ENCODE measurements at regions of chr5 and their contacts with region 1.

Region 1: DNA sequence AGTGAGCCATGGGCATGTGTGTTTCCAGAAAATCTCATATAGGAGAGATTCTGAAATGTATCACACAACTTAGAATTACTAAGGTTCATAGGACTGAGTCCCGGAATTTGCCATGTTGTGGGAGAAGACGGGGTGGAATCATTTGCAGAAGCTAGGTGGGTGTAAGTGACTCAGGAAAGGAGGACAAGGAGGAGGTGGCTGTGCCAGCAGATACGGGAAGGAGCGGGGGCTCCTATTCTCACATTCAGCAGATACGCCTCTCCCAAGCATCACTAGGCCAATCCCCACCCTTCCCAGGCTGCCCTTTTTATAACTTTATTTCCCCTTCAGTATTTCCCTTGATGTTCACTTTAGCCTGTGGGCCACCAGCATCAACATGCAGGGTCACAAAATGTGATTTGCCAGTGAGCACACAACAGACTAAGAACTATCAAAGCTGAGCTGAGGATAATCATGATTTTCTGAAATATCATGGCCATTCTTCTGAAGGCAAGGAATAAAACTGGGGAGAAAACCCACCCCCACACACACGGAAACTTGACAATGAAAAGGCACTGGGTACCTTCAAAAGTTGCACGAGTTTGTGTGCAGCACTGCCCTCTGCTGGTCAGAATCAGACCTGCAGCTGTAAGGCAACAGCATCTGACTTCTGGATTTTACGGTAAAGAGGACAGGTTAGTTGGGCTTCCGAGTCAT is 133.2 kb downstream of the MTX3 start:
- DNase-seq: peak; percentile 78 to 84
- H3K4me3 ChIP-seq: no peak overlapping the region
- H3K27ac ChIP-seq: no peak overlapping the region
- H3K4me1 ChIP-seq: no peaks in the 10 kb centered on the region
- H3K27me3 ChIP-seq: no peaks in the 10 kb centered on the region
- CTCF ChIP-seq: peak; percentile 75 to 95 (median 88)
- POLR2A ChIP-seq: no peak

Region 2: DNA sequence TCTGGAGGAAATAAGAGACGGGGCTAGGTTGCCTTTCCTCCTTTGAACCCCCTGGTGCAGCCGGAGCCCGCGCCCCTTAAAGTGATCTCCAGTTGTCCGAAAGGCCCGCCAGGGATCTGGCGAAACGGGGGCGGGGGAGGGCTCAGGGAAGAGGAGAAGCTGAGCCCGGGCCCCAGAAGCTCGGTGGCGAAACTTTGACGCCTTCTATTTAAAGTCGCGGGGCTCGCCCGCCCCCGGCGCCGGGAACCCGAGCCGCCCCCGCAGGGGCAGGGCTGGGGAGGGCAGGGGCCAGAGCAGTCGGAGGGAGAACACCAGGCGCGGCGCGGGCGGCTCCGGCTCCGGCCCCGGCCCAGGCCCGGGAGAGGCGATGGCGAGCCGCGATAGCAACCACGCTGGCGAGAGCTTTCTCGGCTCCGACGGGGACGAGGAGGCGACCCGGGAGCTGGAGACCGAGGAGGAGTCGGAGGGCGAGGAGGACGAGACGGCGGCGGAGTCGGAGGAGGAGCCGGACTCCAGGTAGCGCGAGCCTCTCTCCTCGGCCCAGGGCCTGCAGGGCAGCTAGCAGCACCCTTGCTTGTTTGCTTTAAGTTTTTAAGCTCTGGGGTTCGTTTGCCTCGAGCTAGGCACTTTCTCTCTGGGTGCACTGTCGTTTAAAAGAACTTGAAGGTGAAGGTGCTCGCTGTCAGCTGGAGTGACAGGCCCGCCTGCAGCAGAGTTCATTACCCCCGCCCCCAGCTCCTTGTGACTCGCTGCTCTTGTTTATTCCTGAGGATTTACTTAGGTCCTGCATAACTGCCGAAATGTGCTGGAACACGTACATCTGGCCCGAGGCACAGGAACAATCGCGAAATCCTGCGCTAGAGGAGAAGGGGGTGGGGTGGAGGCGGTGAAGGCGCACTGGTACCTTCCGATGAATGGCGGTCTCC is 168.1 kb before region 1 on chr5 and contains the start of gene CMYA5:
- intact Hi-C with region 1: loop called (anchors 10 kb)
- DNase-seq: peak; percentile 78 to 79
- H3K4me3 ChIP-seq: peak within 1 kb of the TSS; percentile 13 to 50 (median 43)
- H3K27ac ChIP-seq: peak within 1 kb of the TSS; percentile 77 to 85 (median 85)
- H3K4me1 ChIP-seq: peaks cover 18 to 26% of the 10 kb centered on the region in 2 donors
- H3K27me3 ChIP-seq: no peaks in the 10 kb centered on the region
- CTCF ChIP-seq: no peak
- POLR2A ChIP-seq: peak in 1 of 2 donors; percentile 51
- total RNA-seq, gene CMYA5: 15.9 to 33.9 (median 22.0) TPM

Region 3: GRCh38 chr5:79932510-79933504 is 74.9 kb after region 1 on chr5:
- intact Hi-C with region 1: no loop called
- DNase-seq: no peak
- H3K4me3 ChIP-seq: no peak overlapping the region
- H3K27ac ChIP-seq: no peak overlapping the region
- H3K4me1 ChIP-seq: peaks cover 12 to 21% of the 10 kb centered on the region in 2 donors
- H3K27me3 ChIP-seq: no peaks in the 10 kb centered on the region
- CTCF ChIP-seq: no peak
- POLR2A ChIP-seq: no peak

Region 4: GRCh38 chr5:80034962-80035821 is 177.3 kb after region 1 on chr5 and contains the start of gene THBS4:
- intact Hi-C with region 1: no loop called
- DNase-seq: peak in 1 of 2 donors; percentile 3
- H3K4me3 ChIP-seq: peak within 1 kb of the TSS in 1 of 3 donors; percentile 14
- H3K27ac ChIP-seq: no peak within 1 kb of the TSS
- H3K4me1 ChIP-seq: no peaks in the 10 kb centered on the region
- H3K27me3 ChIP-seq: no peaks in the 10 kb centered on the region
- CTCF ChIP-seq: no peak
- POLR2A ChIP-seq: no peak
- total RNA-seq, gene THBS4: 2.4 to 4.5 (median 3.1) TPM